PC-9 (cell line): ENCODE measurements at regions of chr3 and their contacts with region 1.

Region 1: DNA sequence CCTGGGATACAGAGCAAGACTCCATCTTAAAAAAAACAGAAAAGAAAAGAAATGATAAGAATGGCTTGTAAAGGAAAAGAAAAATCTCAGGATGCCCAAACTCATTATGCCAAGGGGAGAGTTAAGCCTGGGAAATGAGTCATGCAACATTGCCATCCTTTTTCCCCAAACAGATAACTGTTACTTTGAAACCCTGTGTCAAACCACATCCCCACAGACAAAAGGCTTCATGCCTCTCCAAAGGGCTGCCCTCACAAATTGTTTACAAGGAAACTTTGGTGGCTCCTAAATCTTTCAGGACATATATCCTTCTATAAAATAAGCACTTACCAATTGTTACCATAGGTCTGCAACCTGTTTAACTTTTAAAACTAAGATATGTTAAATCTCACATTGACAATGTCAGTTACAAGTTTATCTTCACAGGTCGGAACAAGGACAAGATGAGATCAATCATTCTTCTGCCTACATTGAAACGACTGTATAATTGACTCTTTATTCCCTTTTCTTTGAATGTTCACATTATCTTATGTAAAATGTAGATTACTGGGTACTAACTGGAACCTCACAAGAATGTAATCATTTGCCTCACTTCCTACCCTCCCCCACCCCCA is 18.6 kb upstream of the SENP7 start:
- DNase-seq: no peak
- H3K4me3 ChIP-seq: no peak overlapping the region
- H3K27ac ChIP-seq: no peak overlapping the region
- H3K4me1 ChIP-seq: no peaks in the 10 kb centered on the region
- H3K27me3 ChIP-seq: peaks cover 15% of the 10 kb centered on the region
- CTCF ChIP-seq: no peak

Region 2: GRCh38 chr3:100546020-100546744 is 985.4 kb before region 1 on chr3:
- CTCF ChIA-PET with region 1: no interaction called
- POLR2A ChIA-PET with region 1: interaction called, 13 read pairs
- intact Hi-C with region 1: no loop called
- DNase-seq: no peak
- H3K4me3 ChIP-seq: no peak overlapping the region
- H3K27ac ChIP-seq: no peak overlapping the region
- H3K4me1 ChIP-seq: 0 out of 2 replicates have a peak, but pooled peaks cover 5% of the 10 kb centered on the region
- H3K27me3 ChIP-seq: no peaks in the 10 kb centered on the region
- CTCF ChIP-seq: no peak

Region 3: GRCh38 chr3:100813828-100814227 is 717.8 kb before region 1 on chr3:
- CTCF ChIA-PET with region 1: no interaction called
- POLR2A ChIA-PET with region 1: no interaction called
- intact Hi-C with region 1: no loop called
- DNase-seq: no peak
- H3K4me3 ChIP-seq: no peak overlapping the region
- H3K27ac ChIP-seq: no peak overlapping the region
- H3K4me1 ChIP-seq: no peaks in the 10 kb centered on the region
- H3K27me3 ChIP-seq: no peaks in the 10 kb centered on the region
- CTCF ChIP-seq: no peak